ENCODE measurements at regions of chr6 and their contacts with region 1.

Region 1: DNA sequence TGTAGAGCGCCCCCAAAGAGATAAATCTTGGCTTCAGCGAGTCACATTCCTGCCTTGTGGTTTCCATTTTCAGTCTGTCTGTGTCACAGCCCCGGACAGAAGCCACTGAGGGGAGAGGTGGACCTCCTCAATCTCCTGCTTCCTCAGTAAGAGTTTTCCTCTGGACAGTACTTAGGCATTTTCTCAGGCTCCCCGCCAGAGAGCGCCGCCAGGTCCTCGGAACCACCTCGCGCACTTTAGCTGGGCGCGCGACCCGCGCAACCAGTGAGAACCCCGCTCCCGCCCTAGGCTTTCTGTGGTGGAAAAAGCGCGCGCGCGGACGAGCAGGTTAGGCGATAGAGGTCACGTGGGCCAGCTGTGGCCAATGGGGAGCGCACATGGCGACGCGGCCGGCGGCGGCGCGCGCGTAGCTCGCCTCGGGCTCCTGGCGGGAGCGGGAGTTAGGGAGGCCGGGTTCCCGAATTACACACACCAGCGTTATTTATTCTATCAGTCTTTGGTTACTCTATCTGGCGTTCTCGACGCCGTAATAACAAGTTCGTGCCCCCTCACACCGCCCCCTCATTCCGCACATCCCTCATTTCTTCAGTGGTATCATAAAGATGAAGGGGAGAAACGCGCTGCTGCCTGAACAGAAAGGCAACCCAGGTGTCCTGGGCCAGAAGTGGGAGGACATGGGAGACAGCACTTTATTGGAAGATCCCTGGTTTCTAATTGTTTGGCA is 19.4 kb downstream of the PXT1 start:
- DNase-seq: peak; percentile 99
- H3K4me3 ChIP-seq: peak overlapping the region; percentile 33 to 70 (median 44)
- H3K27ac ChIP-seq: peak overlapping the region; percentile 83 to 93 (median 92)
- H3K4me1 ChIP-seq: peaks cover 0 to 11% (median 4%) of the 10 kb centered on the region in 4 donors
- H3K27me3 ChIP-seq: no peaks in the 10 kb centered on the region
- CTCF ChIP-seq: peak; percentile 50 to 86 (median 59)
- EP300 ChIP-seq: no peak
- POLR2A ChIP-seq: peak; percentile 60

Region 2: GRCh38 chr6:36442671-36443470 is 19.6 kb after region 1 on chr6 and contains the starts of genes KCTD20 and PXT1:
- in situ Hi-C with region 1: no loop called
- intact Hi-C with region 1: loop called (anchors 1 kb)
- DNase-seq: peak; percentile 91
- H3K4me3 ChIP-seq: peak within 1 kb of the TSS; percentile 63 to 89 (median 73)
- H3K27ac ChIP-seq: peak within 1 kb of the TSS; percentile 91 to 98 (median 96)
- H3K4me1 ChIP-seq: peaks cover 21 to 40% (median 31%) of the 10 kb centered on the region in 4 donors
- H3K27me3 ChIP-seq: no peaks in the 10 kb centered on the region
- CTCF ChIP-seq: no peak
- EP300 ChIP-seq: no peak
- POLR2A ChIP-seq: peak; percentile 69
- total RNA-seq, gene KCTD20: 23.2 to 61.9 (median 29.9) TPM
- total RNA-seq, gene PXT1: 0.14 TPM in 1 of 4 donors, not detected in the others

Region 3: GRCh38 chr6:36563237-36563927 is 140.1 kb after region 1 on chr6:
- in situ Hi-C with region 1: loop called in 1 of 4 experiments (anchors 25 kb)
- intact Hi-C with region 1: no loop called
- DNase-seq: no peak
- H3K4me3 ChIP-seq: no peak overlapping the region
- H3K27ac ChIP-seq: no peak overlapping the region
- H3K4me1 ChIP-seq: no peaks in the 10 kb centered on the region
- H3K27me3 ChIP-seq: no peaks in the 10 kb centered on the region
- CTCF ChIP-seq: no peak
- EP300 ChIP-seq: no peak
- POLR2A ChIP-seq: no peak

Region 4: GRCh38 chr6:36580184-36580526 is 156.9 kb after region 1 on chr6:
- in situ Hi-C with region 1: loop called in 3 of 4 experiments (anchors 10 to 25 kb)
- intact Hi-C with region 1: no loop called
- DNase-seq: no peak
- H3K4me3 ChIP-seq: peak overlapping the region in 1 of 4 donors; percentile 18
- H3K27ac ChIP-seq: peak overlapping the region; percentile 59 to 75 (median 73)
- H3K4me1 ChIP-seq: peaks cover 10 to 22% (median 14%) of the 10 kb centered on the region in 4 donors
- H3K27me3 ChIP-seq: no peaks in the 10 kb centered on the region
- CTCF ChIP-seq: no peak
- EP300 ChIP-seq: no peak
- POLR2A ChIP-seq: no peak

Region 5: GRCh38 chr6:36662827-36663362 is 239.6 kb after region 1 on chr6:
- in situ Hi-C with region 1: no loop called
- intact Hi-C with region 1: no loop called
- DNase-seq: peak; percentile 63
- H3K4me3 ChIP-seq: no peak overlapping the region
- H3K27ac ChIP-seq: no peak overlapping the region
- H3K4me1 ChIP-seq: peaks cover 0 to 40% (median 14%) of the 10 kb centered on the region in 4 donors
- H3K27me3 ChIP-seq: no peaks in the 10 kb centered on the region
- CTCF ChIP-seq: no peak
- EP300 ChIP-seq: no peak
- POLR2A ChIP-seq: no peak

Region 6: GRCh38 chr6:36678518-36679027 is 255.3 kb after region 1 on chr6 and contains the start of gene CDKN1A:
- in situ Hi-C with region 1: no loop called
- intact Hi-C with region 1: loop called (anchors 10 kb)
- DNase-seq: peak; percentile 96
- H3K4me3 ChIP-seq: peak within 1 kb of the TSS; percentile 66 to 84 (median 78)
- H3K27ac ChIP-seq: peak within 1 kb of the TSS; percentile 96 to 98 (median 97)
- H3K4me1 ChIP-seq: peaks cover 22 to 52% (median 46%) of the 10 kb centered on the region in 4 donors
- H3K27me3 ChIP-seq: no peaks in the 10 kb centered on the region
- CTCF ChIP-seq: peak in 1 of 5 experiments; percentile 31
- EP300 ChIP-seq: peak; percentile 61
- POLR2A ChIP-seq: peak; percentile 99
- total RNA-seq, gene CDKN1A: 34.6 to 613 (median 264) TPM

Region 7: GRCh38 chr6:36724514-36725390 is 301.5 kb after region 1 on chr6:
- in situ Hi-C with region 1: loop called in 1 of 4 experiments (anchors 25 kb)
- intact Hi-C with region 1: no loop called
- DNase-seq: peak; percentile 87
- H3K4me3 ChIP-seq: no peak overlapping the region
- H3K27ac ChIP-seq: no peak overlapping the region
- H3K4me1 ChIP-seq: no peaks in the 10 kb centered on the region
- H3K27me3 ChIP-seq: no peaks in the 10 kb centered on the region
- CTCF ChIP-seq: peak; percentile 42 to 76 (median 55)
- EP300 ChIP-seq: no peak
- POLR2A ChIP-seq: no peak